Astrocyte of the cerebellum (primary cell): ENCODE measurements at regions of chr14 and their contacts with region 1.

Region 1: GRCh38 chr14:73180385-73180805 is 44.1 kb downstream of the PSEN1 start:
- DNase-seq: peak; percentile 36
- H3K4me3 ChIP-seq: no peak overlapping the region
- CTCF ChIP-seq: no peak

Region 2: GRCh38 chr14:73245401-73246325 is 65.3 kb after region 1 on chr14:
- in situ Hi-C with region 1: no loop called
- DNase-seq: no peak
- H3K4me3 ChIP-seq: peak overlapping the region; percentile 30
- CTCF ChIP-seq: no peak

Region 3: GRCh38 chr14:73258845-73259611 is 78.6 kb after region 1 on chr14:
- in situ Hi-C with region 1: no loop called
- DNase-seq: no peak
- H3K4me3 ChIP-seq: no peak overlapping the region
- CTCF ChIP-seq: no peak

Region 4: DNA sequence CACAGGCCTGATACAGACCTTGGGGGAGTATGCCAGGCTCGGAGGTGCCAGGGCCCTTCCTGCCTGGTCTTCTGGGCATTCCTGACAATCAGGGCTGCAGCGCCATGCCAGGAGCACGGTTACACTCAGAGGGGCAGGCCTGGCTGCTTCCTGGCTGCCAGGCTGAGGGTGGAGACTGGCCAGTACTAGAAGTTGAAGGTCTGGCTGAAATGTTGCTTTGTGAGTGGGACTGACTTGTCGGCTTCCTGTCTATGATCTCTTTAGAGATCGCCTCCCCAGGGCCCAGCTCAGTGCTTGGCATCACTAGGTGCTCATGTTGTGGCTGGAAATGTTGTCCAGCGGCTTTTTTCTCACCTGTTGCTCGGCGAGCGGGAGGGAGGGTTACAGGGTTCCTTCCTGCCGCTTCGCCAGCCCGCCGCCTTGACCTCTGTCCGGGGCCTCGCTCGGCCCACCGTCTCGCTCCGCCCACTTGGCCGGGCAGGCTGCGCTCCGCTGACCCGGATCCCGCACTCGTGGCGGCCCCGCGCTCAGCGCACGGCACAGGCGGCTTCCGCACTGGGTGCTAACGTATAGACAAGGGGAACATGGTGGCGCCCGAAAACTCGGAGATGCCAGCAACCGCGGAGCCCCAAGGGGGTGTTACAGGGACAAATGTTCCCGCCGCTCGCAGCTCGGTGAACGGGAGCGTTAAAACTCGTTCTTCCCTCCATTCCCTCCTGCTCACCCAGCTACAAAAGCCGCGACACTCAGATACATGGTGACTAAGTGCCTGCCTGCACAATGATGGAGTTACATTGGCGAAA is 89.5 kb after region 1 on chr14:
- in situ Hi-C with region 1: loop called (anchors 10 kb)
- DNase-seq: no peak
- H3K4me3 ChIP-seq: peak overlapping the region; percentile 26
- CTCF ChIP-seq: no peak

Region 5: GRCh38 chr14:73463411-73463810 is 283.0 kb after region 1 on chr14:
- in situ Hi-C with region 1: loop called (anchors 10 kb)
- DNase-seq: no peak
- H3K4me3 ChIP-seq: no peak overlapping the region
- CTCF ChIP-seq: no peak